CD8-positive, alpha-beta T cell (primary cell): ENCODE measurements at regions of chrX and their contacts with region 1.

Region 1: DNA sequence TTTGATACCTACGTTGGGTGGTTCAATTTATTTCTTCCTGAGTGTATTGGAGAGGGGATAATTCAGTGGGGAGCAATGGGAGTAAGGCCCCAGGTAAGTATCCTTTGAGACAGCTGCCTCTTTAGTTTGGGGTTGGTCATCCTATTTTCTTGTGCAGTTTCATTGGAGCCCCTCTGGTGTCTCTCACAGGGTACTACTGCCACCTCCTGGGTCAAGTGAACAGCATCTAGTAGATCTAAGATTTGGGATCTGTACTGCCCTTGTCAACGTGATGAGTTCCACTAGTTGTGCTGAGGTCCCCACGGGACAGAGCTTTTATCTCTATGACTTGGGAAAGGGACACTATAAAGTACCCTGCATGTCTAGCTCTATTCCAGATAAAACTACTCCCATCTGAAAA is 80.6 kb downstream of the PBDC1 start:
- DNase-seq: peak in 8 of 9 experiments; percentile 3 to 66 (median 34)
- ATAC-seq: peak; percentile 72
- H3K4me3 ChIP-seq: no peak overlapping the region
- H3K4me3 Mint-ChIP-seq: no peak overlapping the region
- H3K27ac ChIP-seq: no peak overlapping the region
- H3K27ac Mint-ChIP-seq: no peak overlapping the region
- H3K4me1 ChIP-seq: no peaks in the 10 kb centered on the region
- H3K4me1 Mint-ChIP-seq: peaks cover 4% of the 10 kb centered on the region
- H3K27me3 ChIP-seq: no peaks in the 10 kb centered on the region
- H3K27me3 Mint-ChIP-seq: no peaks in the 10 kb centered on the region
- CTCF ChIP-seq: peak; percentile 41

Region 2: GRCh38 chrX:75038925-75039324 is 1214.5 kb before region 1 on chrX:
- CTCF ChIA-PET with region 1: no interaction called
- POLR2A ChIA-PET with region 1: no interaction called
- intact Hi-C with region 1: loop called in 1 of 2 experiments (anchors 5 kb)
- DNase-seq: peak in 2 of 9 experiments; percentile 10 to 16
- ATAC-seq: no peak
- H3K4me3 ChIP-seq: no peak overlapping the region
- H3K4me3 Mint-ChIP-seq: no peak overlapping the region
- H3K27ac ChIP-seq: no peak overlapping the region
- H3K27ac Mint-ChIP-seq: no peak overlapping the region
- H3K4me1 ChIP-seq: no peaks in the 10 kb centered on the region
- H3K4me1 Mint-ChIP-seq: no peaks in the 10 kb centered on the region
- H3K27me3 ChIP-seq: no peaks in the 10 kb centered on the region
- H3K27me3 Mint-ChIP-seq: no peaks in the 10 kb centered on the region
- CTCF ChIP-seq: no peak

Region 3: GRCh38 chrX:75609406-75609805 is 644.0 kb before region 1 on chrX:
- CTCF ChIA-PET with region 1: no interaction called
- POLR2A ChIA-PET with region 1: no interaction called
- intact Hi-C with region 1: no loop called
- DNase-seq: no peak
- ATAC-seq: no peak
- H3K4me3 ChIP-seq: no peak overlapping the region
- H3K4me3 Mint-ChIP-seq: no peak overlapping the region
- H3K27ac ChIP-seq: no peak overlapping the region
- H3K27ac Mint-ChIP-seq: no peak overlapping the region
- H3K4me1 ChIP-seq: no peaks in the 10 kb centered on the region
- H3K4me1 Mint-ChIP-seq: no peaks in the 10 kb centered on the region
- H3K27me3 ChIP-seq: no peaks in the 10 kb centered on the region
- H3K27me3 Mint-ChIP-seq: no peaks in the 10 kb centered on the region
- CTCF ChIP-seq: no peak

Region 4: GRCh38 chrX:76109654-76110053 is 143.8 kb before region 1 on chrX:
- CTCF ChIA-PET with region 1: no interaction called
- POLR2A ChIA-PET with region 1: no interaction called
- intact Hi-C with region 1: no loop called
- DNase-seq: no peak
- ATAC-seq: no peak
- H3K4me3 ChIP-seq: no peak overlapping the region
- H3K4me3 Mint-ChIP-seq: no peak overlapping the region
- H3K27ac ChIP-seq: no peak overlapping the region
- H3K27ac Mint-ChIP-seq: no peak overlapping the region
- H3K4me1 ChIP-seq: no peaks in the 10 kb centered on the region
- H3K4me1 Mint-ChIP-seq: no peaks in the 10 kb centered on the region
- H3K27me3 ChIP-seq: no peaks in the 10 kb centered on the region
- H3K27me3 Mint-ChIP-seq: no peaks in the 10 kb centered on the region
- CTCF ChIP-seq: no peak